ENCODE measurements at regions of chr11 and their contacts with region 1.

Region 1: DNA sequence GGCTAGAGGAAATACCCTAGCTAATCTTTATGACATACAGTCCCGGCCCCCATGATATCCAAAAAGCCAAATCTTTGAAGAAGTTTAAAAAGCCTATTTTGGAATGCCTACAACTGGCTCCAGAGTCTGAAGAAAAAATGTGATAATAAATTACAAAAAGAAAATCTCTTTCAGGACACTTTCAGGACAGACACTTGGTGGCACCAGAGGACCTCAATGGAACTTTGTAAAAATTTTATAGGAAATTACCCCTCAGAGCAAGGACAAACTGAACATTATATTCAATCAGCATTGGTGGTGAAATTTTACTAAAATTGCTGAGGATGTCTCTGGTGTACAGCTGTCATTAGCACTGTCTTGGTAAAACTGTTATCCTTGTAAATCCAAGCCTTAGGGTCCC is 81.0 kb downstream of the CCDC73 start:
- DNase-seq: no peak
- H3K4me3 ChIP-seq: no peak overlapping the region
- H3K4me3 Mint-ChIP-seq: no peak overlapping the region
- H3K27ac ChIP-seq: no peak overlapping the region
- H3K27ac Mint-ChIP-seq: no peak overlapping the region
- H3K4me1 ChIP-seq: no peaks in the 10 kb centered on the region
- H3K4me1 Mint-ChIP-seq: no peaks in the 10 kb centered on the region
- H3K27me3 ChIP-seq: no peaks in the 10 kb centered on the region
- H3K27me3 Mint-ChIP-seq: peaks cover 7 to 14% of the 10 kb centered on the region in 2 donors

Region 2: DNA sequence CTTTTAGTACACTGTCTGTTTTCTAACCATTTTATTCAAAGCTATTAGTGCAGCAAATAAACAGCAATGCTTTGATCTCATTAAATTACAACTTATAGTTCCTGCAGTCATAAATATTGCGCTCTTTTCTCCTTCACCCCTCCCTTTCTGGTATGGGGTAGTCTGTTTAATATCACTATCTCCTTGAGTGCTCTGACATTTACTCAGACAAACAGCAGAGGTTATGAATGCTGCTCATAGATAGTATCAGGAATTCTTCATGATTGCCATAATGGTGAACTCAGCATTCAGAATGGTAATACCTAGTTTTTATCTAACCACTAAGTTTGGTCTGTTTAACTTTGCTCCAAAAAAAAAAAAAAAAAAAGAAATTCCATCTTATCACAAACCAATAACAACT is 42.4 kb before region 1 on chr11:
- CTCF ChIA-PET with region 1: no interaction called
- POLR2A ChIA-PET with region 1: no interaction called
- intact Hi-C with region 1: no loop called
- DNase-seq: no peak
- H3K4me3 ChIP-seq: no peak overlapping the region
- H3K4me3 Mint-ChIP-seq: no peak overlapping the region
- H3K27ac ChIP-seq: no peak overlapping the region
- H3K27ac Mint-ChIP-seq: no peak overlapping the region
- H3K4me1 ChIP-seq: no peaks in the 10 kb centered on the region
- H3K4me1 Mint-ChIP-seq: no peaks in the 10 kb centered on the region
- H3K27me3 ChIP-seq: no peaks in the 10 kb centered on the region
- H3K27me3 Mint-ChIP-seq: peaks cover 2 to 3% of the 10 kb centered on the region in 2 donors

Region 3: GRCh38 chr11:32775908-32776307 is 62.4 kb after region 1 on chr11:
- CTCF ChIA-PET with region 1: no interaction called
- POLR2A ChIA-PET with region 1: no interaction called
- intact Hi-C with region 1: loop called (anchors 10 kb)
- DNase-seq: no peak
- H3K4me3 ChIP-seq: no peak overlapping the region
- H3K4me3 Mint-ChIP-seq: peak overlapping the region in 7 of 8 donors; percentile 0 to 60 (median 1)
- H3K27ac ChIP-seq: no peak overlapping the region
- H3K27ac Mint-ChIP-seq: peak overlapping the region in 2 of 7 donors; percentile 0 to 1
- H3K4me1 ChIP-seq: no peaks in the 10 kb centered on the region
- H3K4me1 Mint-ChIP-seq: peaks cover 10 to 12% (median 11%) of the 10 kb centered on the region in 4 donors
- H3K27me3 ChIP-seq: no peaks in the 10 kb centered on the region
- H3K27me3 Mint-ChIP-seq: no peaks in the 10 kb centered on the region